ENCODE measurements at regions of chr6 and their contacts with region 1.

Region 1: DNA sequence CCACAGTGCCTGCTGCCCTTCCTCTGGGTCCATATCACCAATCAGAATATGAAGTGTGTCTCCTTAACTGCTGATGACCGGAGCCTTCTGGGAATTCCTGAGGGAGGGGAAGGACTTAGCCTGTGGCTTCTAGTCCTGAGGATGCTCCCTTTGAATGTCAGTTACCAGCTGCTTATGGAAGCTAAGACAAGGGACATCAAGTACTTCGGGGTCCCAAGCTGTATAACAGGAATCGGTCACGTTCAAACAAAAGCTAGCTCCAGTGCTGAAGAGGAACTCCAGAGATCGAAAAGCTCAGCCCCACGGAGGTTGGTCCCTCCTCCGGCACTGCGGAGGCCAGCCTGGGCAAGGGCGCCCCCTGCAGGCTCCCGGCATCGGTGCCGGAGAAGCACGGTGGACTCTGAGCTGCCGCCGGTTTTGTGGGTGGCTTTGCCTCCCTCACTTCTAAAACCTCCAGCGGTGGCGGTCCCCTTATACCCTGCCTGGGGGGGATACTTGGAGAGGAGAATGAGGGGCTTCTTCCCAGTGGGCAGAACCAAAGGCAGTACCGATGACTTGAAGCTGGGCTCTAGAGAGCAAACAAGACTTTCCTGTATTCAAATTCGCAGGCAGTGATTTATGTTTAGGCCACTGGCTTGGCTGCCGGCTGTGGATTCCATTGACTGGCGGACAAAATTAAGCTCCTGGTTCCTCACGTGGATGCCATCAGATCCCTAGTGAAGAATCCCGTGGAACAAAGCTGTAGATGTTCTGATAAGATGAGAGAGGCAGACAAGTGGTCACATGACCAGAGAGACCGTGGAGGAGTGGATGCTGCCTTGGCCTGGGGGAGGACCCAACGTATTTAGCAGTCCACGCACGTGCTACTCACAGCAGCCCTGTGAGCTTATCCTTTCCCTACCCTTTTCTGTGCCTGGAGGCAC is 16.2 kb upstream of the UBR2 start:
- H3K4me3 ChIP-seq: peak overlapping the region; percentile 68
- H3K27ac ChIP-seq: no peak overlapping the region; the same call in 1 of the 2 replicates
- H3K4me1 ChIP-seq: no peaks in the 10 kb centered on the region
- CTCF ChIP-seq: peak; percentile 96

Region 2: DNA sequence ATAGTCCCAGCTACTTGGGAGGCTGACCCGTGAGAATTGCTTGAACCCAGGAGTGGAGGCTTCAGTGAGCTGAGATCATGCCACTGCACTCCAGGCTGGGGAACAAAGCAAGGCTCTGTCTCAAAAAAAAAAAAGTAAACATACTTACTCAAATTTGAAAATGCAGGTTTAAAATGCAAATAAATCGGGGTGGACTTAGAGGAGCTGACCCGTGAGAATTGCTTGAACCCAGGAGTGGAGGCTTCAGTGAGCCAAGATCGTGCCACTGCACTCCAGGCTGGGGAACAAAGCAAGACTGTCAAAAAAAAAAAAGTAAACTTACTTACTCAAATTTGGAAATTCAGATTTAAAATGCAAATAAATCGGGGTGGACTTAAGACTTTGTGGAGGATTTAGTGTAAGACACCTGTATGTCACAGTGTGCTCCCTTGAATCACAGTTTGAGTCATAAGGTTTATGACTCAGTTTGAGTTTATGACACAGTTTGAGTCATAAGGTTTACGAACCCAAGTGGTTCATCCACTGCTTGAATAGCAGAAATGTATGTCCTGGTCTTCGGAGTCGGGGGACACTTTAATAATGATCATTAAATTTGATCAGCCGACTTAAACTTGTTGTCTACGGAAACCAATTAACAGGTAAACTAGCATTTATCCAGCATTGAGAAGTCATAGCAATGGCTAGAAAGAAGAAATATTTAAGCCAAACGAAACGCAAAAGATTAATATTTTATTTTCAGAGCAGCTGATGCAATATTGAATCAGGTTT is 323.3 kb before region 1 on chr6:
- CTCF ChIA-PET with region 1: interaction called, 21 read pairs
- POLR2A ChIA-PET with region 1: no interaction called
- H3K4me3 ChIP-seq: no peak overlapping the region
- H3K27ac ChIP-seq: 0 out of 2 replicates have a peak overlapping the region, but pooled peaks have one; percentile 6
- H3K4me1 ChIP-seq: peaks cover 16% of the 10 kb centered on the region
- CTCF ChIP-seq: no peak

Region 3: DNA sequence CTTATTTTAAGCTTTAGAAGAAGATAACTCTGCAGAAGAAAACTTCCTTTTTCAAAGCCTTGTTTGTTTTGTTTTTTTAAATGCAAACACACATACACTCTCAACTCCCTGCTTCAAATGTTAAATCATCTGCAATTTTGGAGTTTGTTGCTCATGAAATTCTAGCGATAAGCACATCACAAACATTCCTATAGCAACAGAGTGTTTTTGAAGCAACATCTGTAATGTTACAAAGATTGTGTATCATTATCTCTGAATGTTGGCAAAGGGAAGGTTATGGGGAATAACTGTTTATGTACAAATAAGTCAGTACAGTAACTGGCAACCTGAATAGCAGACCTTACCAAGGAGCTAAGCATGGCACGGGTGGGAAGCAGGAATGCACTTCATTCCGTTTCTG is 245.3 kb before region 1 on chr6:
- CTCF ChIA-PET with region 1: interaction called, 14 read pairs
- POLR2A ChIA-PET with region 1: no interaction called
- H3K4me3 ChIP-seq: no peak overlapping the region
- H3K27ac ChIP-seq: no peak overlapping the region
- H3K4me1 ChIP-seq: no peaks in the 10 kb centered on the region
- CTCF ChIP-seq: no peak

Region 4: DNA sequence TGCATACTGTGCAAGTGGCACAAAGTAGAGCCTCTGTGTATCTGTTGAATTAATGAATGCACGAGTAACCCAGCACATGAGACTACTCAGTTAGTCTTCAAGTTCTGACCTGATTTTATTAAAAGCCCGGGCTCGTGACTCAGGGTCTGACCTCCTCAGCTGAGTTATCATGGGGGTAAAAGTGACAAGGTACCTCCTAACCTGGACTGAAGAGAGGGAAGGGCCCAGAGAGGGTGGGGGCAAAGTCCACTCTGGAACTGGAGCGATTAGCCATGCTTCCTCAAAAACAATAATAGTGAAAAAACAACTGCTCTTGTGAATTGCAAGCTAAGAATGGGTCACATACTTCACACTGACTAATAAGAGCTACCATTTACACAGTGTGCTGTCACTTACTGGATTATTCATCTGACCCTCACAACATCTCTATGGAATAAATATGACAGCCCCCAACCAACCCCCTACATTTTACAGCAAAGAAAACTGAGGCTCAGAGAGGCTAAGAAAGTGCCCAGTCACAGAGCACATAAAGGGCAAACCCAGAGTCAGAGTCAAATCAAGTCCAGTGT is 122.7 kb before region 1 on chr6:
- CTCF ChIA-PET with region 1: interaction called, 11 read pairs
- POLR2A ChIA-PET with region 1: no interaction called
- H3K4me3 ChIP-seq: no peak overlapping the region
- H3K27ac ChIP-seq: no peak overlapping the region
- H3K4me1 ChIP-seq: no peaks in the 10 kb centered on the region
- CTCF ChIP-seq: no peak

Region 5: GRCh38 chr6:42493914-42494539 is 53.6 kb before region 1 on chr6:
- CTCF ChIA-PET with region 1: interaction called, 10 read pairs
- POLR2A ChIA-PET with region 1: interaction called, 3 read pairs
- H3K4me3 ChIP-seq: no peak overlapping the region
- H3K27ac ChIP-seq: no peak overlapping the region
- H3K4me1 ChIP-seq: no peaks in the 10 kb centered on the region
- CTCF ChIP-seq: no peak

Region 6: DNA sequence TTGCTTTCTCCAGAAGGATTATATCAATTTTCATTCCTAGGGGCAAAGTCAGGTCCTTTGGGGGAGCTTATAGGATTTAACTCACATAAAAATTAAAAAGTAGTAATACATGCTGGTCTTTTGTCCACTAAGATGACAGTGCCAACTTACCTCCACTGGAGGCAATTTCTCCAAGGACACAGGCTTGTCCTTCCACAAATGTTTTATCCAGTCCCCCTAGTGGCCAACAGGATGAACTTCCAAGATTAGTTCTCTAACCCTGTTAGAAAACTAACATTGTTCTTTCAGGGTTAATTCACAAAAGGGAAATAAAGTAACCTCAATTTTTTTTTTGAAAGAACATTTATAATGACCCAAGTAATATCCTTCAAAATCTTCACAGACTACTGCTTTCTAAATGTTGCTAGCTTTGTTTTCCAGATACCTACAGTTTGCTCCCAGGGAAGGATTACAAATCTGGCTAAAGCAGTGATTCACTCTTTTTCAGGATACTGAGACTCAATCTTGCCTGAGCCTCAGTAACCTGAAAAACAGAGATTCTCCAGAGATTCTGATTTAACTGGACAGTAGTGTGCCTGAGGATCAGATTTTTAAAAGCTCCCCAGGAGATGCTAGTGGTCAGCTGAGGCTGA is 15.5 kb before region 1 on chr6:
- CTCF ChIA-PET with region 1: interaction called, 160 read pairs
- POLR2A ChIA-PET with region 1: no interaction called
- H3K4me3 ChIP-seq: no peak overlapping the region
- H3K27ac ChIP-seq: no peak overlapping the region
- H3K4me1 ChIP-seq: no peaks in the 10 kb centered on the region
- CTCF ChIP-seq: peak; percentile 42; the same call in 1 of the 2 replicates

Region 7: GRCh38 chr6:42726485-42727086 is 178.9 kb after region 1 on chr6:
- CTCF ChIA-PET with region 1: interaction called, 14 read pairs
- POLR2A ChIA-PET with region 1: no interaction called
- H3K4me3 ChIP-seq: no peak overlapping the region
- H3K27ac ChIP-seq: no peak overlapping the region
- H3K4me1 ChIP-seq: peaks cover 5% of the 10 kb centered on the region
- CTCF ChIP-seq: peak; percentile 89

Measured in HEK293 (cell line).